WTC11 (cell line): ENCODE measurements at regions of chr4 and their contacts with region 1.

Region 1: GRCh38 chr4:69057620-69058409 is 38.5 kb upstream of the UGT2B7 start:
- DNase-seq: peak; percentile 20
- ATAC-seq: peak; percentile 85
- H3K4me3 Mint-ChIP-seq: peak overlapping the region; percentile 34
- H3K27ac Mint-ChIP-seq: peak overlapping the region; percentile 57
- H3K4me1 Mint-ChIP-seq: peaks cover 38% of the 10 kb centered on the region
- H3K27me3 Mint-ChIP-seq: no peaks in the 10 kb centered on the region
- CTCF ChIP-seq: no peak

Region 2: GRCh38 chr4:68883870-68884269 is 173.9 kb before region 1 on chr4:
- CTCF ChIA-PET with region 1: no interaction called
- POLR2A ChIA-PET with region 1: no interaction called
- DNase-seq: no peak
- ATAC-seq: no peak
- H3K4me3 Mint-ChIP-seq: no peak overlapping the region
- H3K27ac Mint-ChIP-seq: no peak overlapping the region
- H3K4me1 Mint-ChIP-seq: no peaks in the 10 kb centered on the region
- H3K27me3 Mint-ChIP-seq: no peaks in the 10 kb centered on the region
- CTCF ChIP-seq: no peak

Region 3: GRCh38 chr4:68904786-68905185 is 153.0 kb before region 1 on chr4:
- CTCF ChIA-PET with region 1: interaction called, 4 read pairs
- POLR2A ChIA-PET with region 1: interaction called, 11 read pairs
- DNase-seq: peak; percentile 17
- ATAC-seq: peak; percentile 23
- H3K4me3 Mint-ChIP-seq: peak overlapping the region; percentile 71
- H3K27ac Mint-ChIP-seq: peak overlapping the region; percentile 100
- H3K4me1 Mint-ChIP-seq: peaks cover 55% of the 10 kb centered on the region
- H3K27me3 Mint-ChIP-seq: no peaks in the 10 kb centered on the region
- CTCF ChIP-seq: no peak

Region 4: GRCh38 chr4:69044247-69044646 is 13.6 kb before region 1 on chr4:
- CTCF ChIA-PET with region 1: no interaction called
- POLR2A ChIA-PET with region 1: no interaction called
- DNase-seq: no peak
- ATAC-seq: no peak
- H3K4me3 Mint-ChIP-seq: no peak overlapping the region
- H3K27ac Mint-ChIP-seq: no peak overlapping the region
- H3K4me1 Mint-ChIP-seq: no peaks in the 10 kb centered on the region
- H3K27me3 Mint-ChIP-seq: no peaks in the 10 kb centered on the region
- CTCF ChIP-seq: no peak

Region 5: GRCh38 chr4:69167300-69167699 is 109.5 kb after region 1 on chr4:
- CTCF ChIA-PET with region 1: interaction called, 10 read pairs
- POLR2A ChIA-PET with region 1: no interaction called
- DNase-seq: no peak
- ATAC-seq: no peak
- H3K4me3 Mint-ChIP-seq: no peak overlapping the region
- H3K27ac Mint-ChIP-seq: no peak overlapping the region
- H3K4me1 Mint-ChIP-seq: peaks cover 6% of the 10 kb centered on the region
- H3K27me3 Mint-ChIP-seq: no peaks in the 10 kb centered on the region
- CTCF ChIP-seq: no peak

Region 6: DNA sequence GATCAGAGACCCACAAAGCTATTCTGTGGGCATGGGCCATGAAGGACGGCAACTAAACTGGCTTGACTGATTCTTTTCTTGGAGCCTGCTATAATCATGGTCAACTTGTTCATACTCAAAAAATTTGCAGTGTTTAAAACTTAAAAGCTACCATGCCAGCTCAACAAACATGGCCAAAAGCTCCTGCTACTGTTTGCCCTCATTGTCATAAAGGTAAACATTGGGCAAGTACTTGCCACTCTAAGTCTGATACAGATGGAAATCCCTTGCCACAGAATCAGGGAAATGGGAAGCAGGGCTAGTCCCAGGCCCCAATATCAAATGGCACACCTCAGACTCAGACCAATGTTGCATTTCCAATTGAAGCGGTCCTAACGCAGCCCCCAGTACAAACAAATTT is 136.4 kb after region 1 on chr4:
- CTCF ChIA-PET with region 1: no interaction called
- POLR2A ChIA-PET with region 1: no interaction called
- DNase-seq: no peak
- ATAC-seq: no peak
- H3K4me3 Mint-ChIP-seq: no peak overlapping the region
- H3K27ac Mint-ChIP-seq: no peak overlapping the region
- H3K4me1 Mint-ChIP-seq: no peaks in the 10 kb centered on the region
- H3K27me3 Mint-ChIP-seq: no peaks in the 10 kb centered on the region
- CTCF ChIP-seq: no peak